ENCODE measurements at regions of chr3 and their contacts with region 1.

Region 1: GRCh38 chr3:117059067-117059955 is 349.7 kb downstream of the TUSC7 start:
- DNase-seq: no peak
- H3K4me3 ChIP-seq: peak overlapping the region in 1 of 4 experiments; percentile 10; a peak in 1 of 8 replicates
- H3K27ac ChIP-seq: no peak overlapping the region
- H3K4me1 ChIP-seq: peaks cover 0 to 14% (median 2%) of the 10 kb centered on the region in 4 experiments; a peak in 4 of 7 replicates
- H3K27me3 ChIP-seq: no peaks in the 10 kb centered on the region
- CTCF ChIP-seq: peak in 2 of 3 experiments; percentile 32 to 36; a peak in 2 of 4 replicates
- EP300 ChIP-seq: no peak
- POLR2A ChIP-seq: no peak
- RAD21 ChIP-seq: peak; percentile 56 to 60

Region 2: GRCh38 chr3:116749388-116749787 is 309.9 kb before region 1 on chr3:
- CTCF ChIA-PET with region 1: no interaction called
- POLR2A ChIA-PET with region 1: no interaction called
- DNase-seq: no peak
- H3K4me3 ChIP-seq: no peak overlapping the region
- H3K27ac ChIP-seq: no peak overlapping the region
- H3K4me1 ChIP-seq: no peaks in the 10 kb centered on the region
- H3K27me3 ChIP-seq: no peaks in the 10 kb centered on the region
- CTCF ChIP-seq: no peak
- EP300 ChIP-seq: no peak
- POLR2A ChIP-seq: no peak
- RAD21 ChIP-seq: no peak

Region 3: GRCh38 chr3:117026401-117026800 is 32.9 kb before region 1 on chr3:
- CTCF ChIA-PET with region 1: no interaction called
- POLR2A ChIA-PET with region 1: no interaction called
- DNase-seq: no peak
- H3K4me3 ChIP-seq: no peak overlapping the region
- H3K27ac ChIP-seq: no peak overlapping the region
- H3K4me1 ChIP-seq: no peaks in the 10 kb centered on the region
- H3K27me3 ChIP-seq: peaks cover 0 to 8% (median 6%) of the 10 kb centered on the region in 4 experiments; a peak in 3 of 7 replicates
- CTCF ChIP-seq: no peak
- EP300 ChIP-seq: no peak
- POLR2A ChIP-seq: no peak
- RAD21 ChIP-seq: no peak

Region 4: DNA sequence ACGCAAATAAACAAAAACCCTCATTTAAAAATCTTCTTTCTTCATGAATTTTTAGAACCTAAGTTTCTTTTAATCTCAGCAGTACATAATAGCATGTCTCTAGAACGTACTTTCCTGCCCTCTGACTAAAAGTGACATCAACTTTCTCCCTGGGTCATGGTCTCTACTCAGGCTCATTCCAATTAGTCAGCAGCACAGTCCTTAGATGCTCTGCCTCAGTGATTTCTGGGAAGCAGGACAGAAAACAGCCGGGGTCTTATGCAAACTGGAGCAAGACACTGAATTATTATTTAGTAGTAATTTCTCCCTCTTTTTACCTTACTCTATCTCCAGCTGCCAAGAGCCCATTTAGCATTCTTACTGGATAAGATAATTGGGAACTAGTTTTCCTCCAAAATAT is 15.5 kb after region 1 on chr3:
- CTCF ChIA-PET with region 1: interaction called, 13 read pairs
- POLR2A ChIA-PET with region 1: no interaction called
- DNase-seq: no peak
- H3K4me3 ChIP-seq: no peak overlapping the region
- H3K27ac ChIP-seq: no peak overlapping the region
- H3K4me1 ChIP-seq: peaks cover 0 to under 1% (median 0%) of the 10 kb centered on the region in 4 experiments; a peak in 1 of 7 replicates
- H3K27me3 ChIP-seq: no peaks in the 10 kb centered on the region
- CTCF ChIP-seq: no peak
- EP300 ChIP-seq: no peak
- POLR2A ChIP-seq: no peak
- RAD21 ChIP-seq: no peak